WTC11 (cell line): ENCODE measurements at regions of chr6 and their contacts with region 1.

Region 1: GRCh38 chr6:31068669-31069340 is 43.6 kb downstream of the C6orf15 start:
- DNase-seq: peak; percentile 84
- ATAC-seq: peak; percentile 62
- H3K4me3 Mint-ChIP-seq: no peak overlapping the region
- H3K27ac Mint-ChIP-seq: 0 out of 2 replicates have a peak overlapping the region, but pooled peaks have one; percentile 42
- H3K4me1 Mint-ChIP-seq: peaks cover 25% of the 10 kb centered on the region
- H3K27me3 Mint-ChIP-seq: no peaks in the 10 kb centered on the region
- CTCF ChIP-seq: peak; percentile 90

Region 2: GRCh38 chr6:30828027-30828960 is 240.5 kb before region 1 on chr6:
- CTCF ChIA-PET with region 1: interaction called, 11 read pairs
- POLR2A ChIA-PET with region 1: no interaction called
- DNase-seq: peak; percentile 87
- ATAC-seq: peak; percentile 81
- H3K4me3 Mint-ChIP-seq: no peak overlapping the region
- H3K27ac Mint-ChIP-seq: peak overlapping the region; percentile 66; the same call in 1 of the 2 replicates
- H3K4me1 Mint-ChIP-seq: peaks cover 40% of the 10 kb centered on the region
- H3K27me3 Mint-ChIP-seq: no peaks in the 10 kb centered on the region
- CTCF ChIP-seq: peak; percentile 79

Region 3: DNA sequence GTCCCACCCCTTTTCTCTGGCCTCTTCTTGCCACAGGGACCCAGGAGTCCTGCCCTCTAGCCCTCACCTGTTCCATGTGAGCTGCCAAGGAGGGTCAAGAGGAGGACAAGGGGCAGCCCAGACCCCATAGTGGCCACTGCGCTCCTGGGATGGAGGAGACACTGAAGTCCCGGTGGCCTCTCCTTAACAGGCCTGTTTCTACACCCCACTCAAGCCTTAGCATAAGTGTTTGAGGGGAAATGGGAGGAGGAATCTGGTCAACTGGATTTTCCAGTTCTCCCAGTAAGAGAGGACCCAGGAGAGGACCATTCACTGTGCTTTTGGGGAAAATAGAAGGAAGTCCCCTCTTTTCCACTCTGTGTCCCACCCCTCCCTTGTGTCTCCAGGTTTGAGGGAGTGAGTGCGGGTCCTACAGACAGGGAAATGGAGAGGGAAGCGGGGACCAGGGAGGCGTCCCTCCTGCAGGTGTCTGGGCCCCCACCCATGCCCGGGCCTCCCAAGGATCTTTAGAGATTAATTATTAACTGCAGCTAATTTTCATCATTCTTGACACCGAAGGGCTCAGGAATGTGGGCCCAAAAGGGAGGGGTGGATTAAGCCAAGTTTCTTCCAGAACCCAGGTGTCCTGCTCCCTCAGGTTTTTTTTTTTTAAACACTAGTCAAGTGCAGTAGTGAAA is 136.7 kb before region 1 on chr6 and contains the start of gene SFTA2:
- CTCF ChIA-PET with region 1: interaction called, 18 read pairs
- POLR2A ChIA-PET with region 1: no interaction called
- DNase-seq: no peak
- ATAC-seq: no peak
- H3K4me3 Mint-ChIP-seq: no peak within 1 kb of the TSS
- H3K27ac Mint-ChIP-seq: no peak within 1 kb of the TSS
- H3K4me1 Mint-ChIP-seq: peaks cover 11% of the 10 kb centered on the region
- H3K27me3 Mint-ChIP-seq: no peaks in the 10 kb centered on the region
- CTCF ChIP-seq: no peak
- total RNA-seq, gene SFTA2: 0.66 to 0.80 TPM in 2 of 3 replicates, not detected in the other

Region 4: GRCh38 chr6:30981942-30982772 is 86.6 kb before region 1 on chr6:
- CTCF ChIA-PET with region 1: interaction called, 20 read pairs
- POLR2A ChIA-PET with region 1: no interaction called
- DNase-seq: peak; percentile 67
- ATAC-seq: peak; percentile 99
- H3K4me3 Mint-ChIP-seq: peak overlapping the region; percentile 57
- H3K27ac Mint-ChIP-seq: peak overlapping the region; percentile 92
- H3K4me1 Mint-ChIP-seq: peaks cover 21% of the 10 kb centered on the region
- H3K27me3 Mint-ChIP-seq: no peaks in the 10 kb centered on the region; the same call in none of the 2 replicates
- CTCF ChIP-seq: no peak

Region 5: GRCh38 chr6:31042806-31043205 is 26.0 kb before region 1 on chr6:
- CTCF ChIA-PET with region 1: interaction called, 27 read pairs
- POLR2A ChIA-PET with region 1: no interaction called
- DNase-seq: peak; percentile 72
- ATAC-seq: peak; percentile 94
- H3K4me3 Mint-ChIP-seq: no peak overlapping the region
- H3K27ac Mint-ChIP-seq: no peak overlapping the region
- H3K4me1 Mint-ChIP-seq: no peaks in the 10 kb centered on the region; the same call in 1 of the 2 replicates
- H3K27me3 Mint-ChIP-seq: no peaks in the 10 kb centered on the region
- CTCF ChIP-seq: peak; percentile 54

Region 6: DNA sequence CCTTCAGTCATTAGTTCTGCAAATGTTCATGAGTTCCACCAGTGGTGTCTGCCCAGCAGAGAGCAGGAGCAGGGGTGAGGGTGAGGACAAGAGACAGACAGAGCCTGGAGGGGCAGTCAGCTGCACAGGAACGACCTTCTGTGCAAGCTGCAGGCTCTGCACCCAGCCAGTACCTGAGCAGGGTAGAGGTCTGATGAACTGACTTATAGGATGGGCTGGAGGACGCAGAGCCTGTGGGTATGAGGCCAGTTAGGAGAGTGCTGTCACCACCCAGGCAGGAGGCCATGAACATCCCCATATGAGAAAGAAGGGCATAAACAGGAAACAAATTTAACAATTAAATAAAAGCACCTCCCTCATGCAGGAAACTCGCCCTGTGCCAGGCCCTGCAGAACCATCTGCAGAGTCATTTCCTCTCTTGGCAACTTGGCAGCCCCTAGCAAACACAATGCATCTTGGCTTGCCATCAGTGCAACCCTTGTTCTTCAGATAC is 25.6 kb after region 1 on chr6:
- CTCF ChIA-PET with region 1: interaction called, 10 read pairs
- POLR2A ChIA-PET with region 1: no interaction called
- DNase-seq: no peak
- ATAC-seq: no peak
- H3K4me3 Mint-ChIP-seq: no peak overlapping the region
- H3K27ac Mint-ChIP-seq: no peak overlapping the region
- H3K4me1 Mint-ChIP-seq: peaks cover 19% of the 10 kb centered on the region
- H3K27me3 Mint-ChIP-seq: no peaks in the 10 kb centered on the region
- CTCF ChIP-seq: no peak